Posterior vena cava (tissue), 2 donors: ENCODE measurements at regions of chr12 and their contacts with region 1.

Region 1: DNA sequence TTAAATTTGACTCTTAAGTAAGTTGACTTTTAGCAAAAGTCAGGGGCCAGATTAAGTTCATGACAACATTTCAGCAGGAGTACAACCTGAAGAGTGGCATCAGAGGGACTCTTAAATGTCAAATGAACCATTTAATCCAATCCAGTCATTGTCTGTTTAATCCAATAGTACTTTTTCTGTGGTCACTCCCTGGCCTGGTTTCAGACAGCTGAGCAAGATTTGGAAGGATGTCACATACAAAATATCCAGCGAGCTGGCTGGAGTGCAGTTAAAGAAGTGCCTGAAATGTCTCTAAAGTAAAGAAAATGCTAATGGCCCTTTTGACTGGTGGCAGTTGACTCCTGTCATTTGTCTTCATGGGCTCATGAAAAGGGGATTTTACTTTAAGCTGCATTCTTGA is 1082.1 kb downstream of the AACS start:
- DNase-seq: no peak

Region 2: GRCh38 chr12:126198966-126199692 is 51.8 kb after region 1 on chr12:
- intact Hi-C with region 1: loop called in 1 of 2 experiments (anchors 1 kb)
- DNase-seq: no peak